ENCODE measurements at regions of chr15 and their contacts with region 1.

Region 1: DNA sequence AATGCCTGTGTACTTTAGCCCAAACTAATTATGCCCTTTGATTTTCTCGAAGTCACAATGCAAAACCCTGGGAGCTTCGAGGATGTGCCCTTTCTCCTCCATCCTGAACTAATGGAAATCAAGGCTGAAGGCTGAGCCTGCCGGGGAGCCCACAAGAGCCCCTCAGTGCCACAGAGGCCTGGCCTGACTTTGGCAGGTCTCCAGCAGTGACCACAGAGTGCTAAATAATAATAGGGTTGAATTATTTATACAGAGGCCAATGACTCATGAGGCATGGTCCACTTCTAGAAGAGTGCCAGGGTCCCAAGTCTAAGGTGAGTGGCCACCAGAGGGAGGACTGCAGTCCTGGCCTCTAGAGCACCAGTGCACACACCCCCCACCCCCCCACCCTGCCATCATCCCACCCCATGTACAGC is 19.1 kb upstream of the GLCE start:
- DNase-seq: no peak
- H3K4me3 ChIP-seq: no peak overlapping the region
- H3K27ac ChIP-seq: peak overlapping the region in 24 of 59 donors; percentile 2 to 73 (median 40)
- H3K27me3 ChIP-seq: peaks cover 0 to 6% (median 0%) of the 10 kb centered on the region in 45 donors
- CTCF ChIP-seq: peak in 13 of 56 donors; percentile 5 to 34 (median 14)

Region 2: DNA sequence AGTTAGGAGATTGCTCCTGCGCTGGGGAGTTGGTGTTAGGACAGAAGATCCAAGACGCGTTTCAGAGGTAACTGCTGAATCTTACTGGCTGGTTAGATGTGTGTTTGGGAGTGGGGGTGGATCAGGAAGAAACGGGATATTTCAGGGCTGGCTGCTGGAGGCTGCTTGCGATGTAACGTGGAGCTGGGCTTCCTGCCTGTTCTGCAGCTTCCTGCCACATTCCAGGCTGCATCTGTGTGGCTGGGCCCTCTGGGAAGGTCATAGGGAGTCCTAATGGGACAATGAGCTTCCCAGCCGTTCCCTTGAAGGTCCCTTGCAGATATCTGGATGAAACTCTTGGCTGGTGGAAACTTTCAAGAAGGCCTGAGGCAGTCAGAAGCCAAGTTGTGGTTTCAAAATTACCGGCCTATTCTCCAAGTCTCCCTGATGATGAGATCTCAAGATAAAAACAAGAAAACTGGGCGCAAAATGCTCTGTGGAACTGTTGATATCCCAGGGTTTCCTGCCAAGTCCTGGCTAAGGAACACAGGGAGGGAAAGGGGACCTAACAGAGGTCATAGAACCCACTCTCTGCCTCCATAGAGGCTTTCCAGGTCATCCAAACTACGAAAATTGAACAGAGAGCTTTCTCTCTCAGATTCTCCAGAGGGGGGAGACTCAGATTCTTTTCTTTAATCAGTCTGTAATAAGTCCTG is 59.8 kb before region 1 on chr15:
- intact Hi-C with region 1: loop called in 1 of 2 experiments (anchors 10 kb)
- DNase-seq: no peak
- H3K4me3 ChIP-seq: peak overlapping the region in 6 of 59 donors; percentile 1 to 17 (median 8)
- H3K27ac ChIP-seq: peak overlapping the region in 28 of 59 donors; percentile 0 to 68 (median 38)
- H3K27me3 ChIP-seq: no peaks in the 10 kb centered on the region
- CTCF ChIP-seq: peak in 7 of 56 donors; percentile 8 to 20 (median 19)

Measured in dorsolateral prefrontal cortex (tissue), 120 donors.